ENCODE measurements at regions of chr4 and their contacts with region 1.

Region 1: GRCh38 chr4:4260253-4260652 is 12.2 kb upstream of the TMEM128 start:
- DNase-seq: peak; percentile 10
- ATAC-seq: peak; percentile 97
- H3K4me3 Mint-ChIP-seq: no peak overlapping the region
- H3K27ac Mint-ChIP-seq: no peak overlapping the region
- H3K4me1 Mint-ChIP-seq: peaks cover 7% of the 10 kb centered on the region
- H3K27me3 Mint-ChIP-seq: no peaks in the 10 kb centered on the region
- CTCF ChIP-seq: peak; percentile 54

Region 2: DNA sequence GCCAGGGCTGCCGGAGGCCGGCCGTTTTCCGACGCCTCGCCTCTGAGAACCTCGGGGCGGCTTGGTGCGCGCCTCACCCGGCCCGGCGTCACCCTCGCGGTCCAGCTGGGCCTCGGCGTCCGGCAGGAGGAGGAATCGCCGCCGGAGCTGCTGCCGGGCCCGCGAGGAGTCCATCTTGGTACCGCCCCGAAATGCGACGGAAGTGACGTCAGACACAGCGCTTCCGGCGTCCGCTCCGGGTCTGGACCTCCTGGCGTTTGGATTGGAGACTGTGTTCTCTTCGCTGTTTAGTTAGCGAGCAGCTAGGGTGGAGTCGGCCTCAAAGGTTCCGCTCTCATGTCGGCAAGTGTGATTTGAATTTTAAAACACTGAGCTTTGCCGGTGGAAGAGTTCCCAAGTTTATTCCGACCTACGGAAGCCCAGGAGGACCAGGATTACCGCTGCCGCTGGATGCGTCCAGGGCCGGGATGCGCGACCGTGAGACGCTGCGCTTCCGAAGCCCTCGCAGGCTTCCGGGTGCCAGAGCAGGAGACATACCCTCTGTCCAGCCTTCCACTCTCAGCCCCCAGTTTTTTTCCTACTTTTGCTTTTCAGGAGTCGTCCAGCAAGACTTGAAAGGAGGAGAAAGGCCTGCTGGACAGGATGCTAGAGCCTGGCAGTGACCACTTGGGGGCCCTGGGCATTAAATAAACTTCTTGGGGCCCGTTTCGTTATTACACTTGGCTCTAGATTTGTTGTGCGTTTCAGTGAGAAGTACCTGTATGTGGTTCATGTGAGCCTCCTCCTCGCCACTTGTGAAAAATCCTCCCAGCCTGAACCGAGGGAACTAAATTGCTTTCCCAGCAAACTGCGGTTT is 12.0 kb before region 1 on chr4 and contains the start of gene TMEM128:
- CTCF ChIA-PET with region 1: interaction called, 14 read pairs
- POLR2A ChIA-PET with region 1: interaction called, 4 read pairs
- intact Hi-C with region 1: no loop called
- DNase-seq: peak; percentile 95
- ATAC-seq: peak; percentile 98
- H3K4me3 Mint-ChIP-seq: peak within 1 kb of the TSS; percentile 98
- H3K27ac Mint-ChIP-seq: peak within 1 kb of the TSS; percentile 98
- H3K4me1 Mint-ChIP-seq: peaks cover 25% of the 10 kb centered on the region
- H3K27me3 Mint-ChIP-seq: no peaks in the 10 kb centered on the region
- CTCF ChIP-seq: peak; percentile 16
- total RNA-seq, gene TMEM128: 19.4 to 20.6 TPM

Region 3: GRCh38 chr4:4284827-4285618 is 24.8 kb after region 1 on chr4:
- CTCF ChIA-PET with region 1: interaction called, 11 read pairs
- POLR2A ChIA-PET with region 1: interaction called, 3 read pairs
- intact Hi-C with region 1: no loop called
- DNase-seq: no peak
- ATAC-seq: no peak
- H3K4me3 Mint-ChIP-seq: no peak overlapping the region
- H3K27ac Mint-ChIP-seq: peak overlapping the region; percentile 31
- H3K4me1 Mint-ChIP-seq: peaks cover 34% of the 10 kb centered on the region
- H3K27me3 Mint-ChIP-seq: no peaks in the 10 kb centered on the region
- CTCF ChIP-seq: no peak

Region 4: GRCh38 chr4:4334798-4335520 is 74.7 kb after region 1 on chr4:
- CTCF ChIA-PET with region 1: interaction called, 27 read pairs
- POLR2A ChIA-PET with region 1: no interaction called
- intact Hi-C with region 1: no loop called
- DNase-seq: peak; percentile 87
- ATAC-seq: peak; percentile 99
- H3K4me3 Mint-ChIP-seq: no peak overlapping the region
- H3K27ac Mint-ChIP-seq: no peak overlapping the region
- H3K4me1 Mint-ChIP-seq: peaks cover 7% of the 10 kb centered on the region
- H3K27me3 Mint-ChIP-seq: no peaks in the 10 kb centered on the region
- CTCF ChIP-seq: peak; percentile 63

Region 5: GRCh38 chr4:4430492-4431197 is 170.4 kb after region 1 on chr4:
- CTCF ChIA-PET with region 1: interaction called, 19 read pairs
- POLR2A ChIA-PET with region 1: no interaction called
- intact Hi-C with region 1: no loop called
- DNase-seq: peak; percentile 80
- ATAC-seq: peak; percentile 99
- H3K4me3 Mint-ChIP-seq: no peak overlapping the region
- H3K27ac Mint-ChIP-seq: no peak overlapping the region
- H3K4me1 Mint-ChIP-seq: peaks cover 7% of the 10 kb centered on the region
- H3K27me3 Mint-ChIP-seq: no peaks in the 10 kb centered on the region
- CTCF ChIP-seq: peak; percentile 73